ENCODE measurements at regions of chr16 and their contacts with region 1.

Region 1: GRCh38 chr16:10964039-10964890 is 19.9 kb downstream of the CLEC16A start:
- DNase-seq: peak; percentile 74
- H3K4me3 Mint-ChIP-seq: peak overlapping the region; percentile 68
- H3K27ac Mint-ChIP-seq: peak overlapping the region; percentile 97
- H3K4me1 Mint-ChIP-seq: peaks cover 75% of the 10 kb centered on the region
- H3K27me3 Mint-ChIP-seq: no peaks in the 10 kb centered on the region

Region 2: GRCh38 chr16:10594367-10594944 is 369.8 kb before region 1 on chr16:
- intact Hi-C with region 1: no loop called
- DNase-seq: no peak
- H3K4me3 Mint-ChIP-seq: no peak overlapping the region
- H3K27ac Mint-ChIP-seq: no peak overlapping the region
- H3K4me1 Mint-ChIP-seq: no peaks in the 10 kb centered on the region
- H3K27me3 Mint-ChIP-seq: peaks cover 2% of the 10 kb centered on the region

Region 3: DNA sequence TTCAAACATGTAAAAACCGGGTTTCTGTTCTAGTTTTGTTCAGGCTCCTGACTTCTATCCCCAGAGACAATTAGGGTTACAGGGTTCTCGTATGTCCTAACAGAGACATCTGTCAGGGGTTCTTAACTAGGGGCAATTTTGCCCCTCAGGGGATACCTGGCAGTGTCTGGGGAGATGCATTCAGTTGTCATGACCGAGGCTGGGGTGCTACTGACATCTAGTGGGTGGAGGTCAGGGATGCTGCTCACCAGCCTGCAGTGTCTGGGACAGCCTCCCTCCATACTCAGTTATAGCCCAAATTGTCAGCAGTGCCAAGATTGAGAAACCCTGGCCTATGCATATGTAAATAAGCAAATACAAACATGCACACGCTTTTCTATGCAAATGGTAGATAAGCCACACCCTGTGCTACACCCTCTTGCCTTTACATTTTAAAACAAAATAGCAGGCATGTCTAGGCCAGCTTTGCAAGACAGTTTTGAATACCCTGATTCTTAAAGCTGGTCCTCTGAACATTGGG is 17.5 kb after region 1 on chr16:
- intact Hi-C with region 1: no loop called
- DNase-seq: peak; percentile 34
- H3K4me3 Mint-ChIP-seq: no peak overlapping the region
- H3K27ac Mint-ChIP-seq: peak overlapping the region; percentile 40
- H3K4me1 Mint-ChIP-seq: peaks cover 73% of the 10 kb centered on the region
- H3K27me3 Mint-ChIP-seq: no peaks in the 10 kb centered on the region

Region 4: DNA sequence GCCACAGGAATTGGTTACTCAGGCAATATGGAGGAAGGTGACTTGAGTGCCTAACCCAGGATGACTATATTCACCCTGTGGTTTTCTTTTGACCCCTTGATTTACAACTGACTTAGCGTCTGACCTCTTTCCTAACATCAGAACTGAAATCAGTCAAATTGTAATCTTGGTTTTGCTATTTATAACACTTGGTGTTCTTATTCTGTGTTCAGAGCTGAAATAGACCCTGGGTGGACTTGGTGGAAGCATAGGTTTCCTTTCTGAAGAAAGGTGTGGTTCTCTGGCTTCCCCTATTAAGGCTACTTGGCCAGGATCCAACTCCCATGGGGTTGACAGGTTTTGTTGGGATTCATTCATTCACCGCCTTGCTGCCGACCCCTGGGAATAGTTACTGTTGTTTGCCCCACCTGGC is 60.9 kb after region 1 on chr16:
- intact Hi-C with region 1: loop called (anchors 1 kb)
- DNase-seq: no peak
- H3K4me3 Mint-ChIP-seq: no peak overlapping the region
- H3K27ac Mint-ChIP-seq: peak overlapping the region; percentile 82
- H3K4me1 Mint-ChIP-seq: peaks cover 31% of the 10 kb centered on the region
- H3K27me3 Mint-ChIP-seq: no peaks in the 10 kb centered on the region

Region 5: GRCh38 chr16:11036040-11036439 is 71.8 kb after region 1 on chr16:
- intact Hi-C with region 1: no loop called
- DNase-seq: no peak
- H3K4me3 Mint-ChIP-seq: no peak overlapping the region
- H3K27ac Mint-ChIP-seq: no peak overlapping the region
- H3K4me1 Mint-ChIP-seq: peaks cover 36% of the 10 kb centered on the region
- H3K27me3 Mint-ChIP-seq: no peaks in the 10 kb centered on the region

Region 6: GRCh38 chr16:11105038-11105903 is 141.0 kb after region 1 on chr16:
- intact Hi-C with region 1: loop called (anchors 1 kb)
- DNase-seq: peak; percentile 44
- H3K4me3 Mint-ChIP-seq: peak overlapping the region; percentile 65
- H3K27ac Mint-ChIP-seq: peak overlapping the region; percentile 88
- H3K4me1 Mint-ChIP-seq: peaks cover 75% of the 10 kb centered on the region
- H3K27me3 Mint-ChIP-seq: no peaks in the 10 kb centered on the region

Region 7: DNA sequence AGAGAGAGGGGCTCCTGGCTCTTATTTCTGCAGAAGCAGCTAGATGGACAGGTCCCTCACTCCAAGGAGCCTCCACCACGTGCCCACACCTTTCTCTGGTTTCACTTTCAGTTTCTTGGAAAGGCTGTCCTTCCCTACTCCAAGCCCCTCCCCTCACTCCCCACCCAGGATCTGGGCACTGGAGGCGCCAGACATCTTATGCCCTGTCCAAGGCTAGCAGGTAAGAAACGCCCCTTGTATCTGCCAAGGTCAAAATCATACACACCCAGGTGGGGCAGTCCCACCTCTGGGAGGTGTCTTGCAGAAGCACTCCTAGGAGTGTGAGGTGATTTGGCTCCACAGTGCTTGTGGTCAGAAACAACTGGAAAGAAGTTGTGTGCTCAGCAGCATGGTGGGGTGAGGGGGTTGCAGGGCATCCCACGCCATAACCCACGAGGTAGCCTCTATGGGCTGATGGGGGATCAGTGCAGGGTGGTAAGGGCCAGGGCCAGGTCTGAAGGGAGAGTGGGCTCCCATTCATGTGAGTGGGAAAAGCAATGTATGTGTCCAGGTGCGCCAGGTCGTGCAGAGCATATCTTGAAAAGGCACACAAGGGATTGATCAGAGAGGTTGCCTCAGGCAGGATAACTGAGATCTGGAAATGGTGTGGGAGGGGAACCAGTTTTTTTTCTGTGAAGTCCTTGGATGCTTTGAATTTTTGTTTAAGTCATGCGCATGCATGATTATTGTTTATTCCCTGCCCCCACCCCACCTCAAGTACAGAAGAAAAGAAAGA is 348.6 kb after region 1 on chr16:
- intact Hi-C with region 1: loop called (anchors 2 kb)
- DNase-seq: peak; percentile 38
- H3K4me3 Mint-ChIP-seq: peak overlapping the region; percentile 27
- H3K27ac Mint-ChIP-seq: peak overlapping the region; percentile 57
- H3K4me1 Mint-ChIP-seq: peaks cover 61% of the 10 kb centered on the region
- H3K27me3 Mint-ChIP-seq: peaks cover 3% of the 10 kb centered on the region

Region 8: GRCh38 chr16:11396241-11397048 is 432.2 kb after region 1 on chr16:
- intact Hi-C with region 1: loop called (anchors 2 kb)
- DNase-seq: peak; percentile 40
- H3K4me3 Mint-ChIP-seq: no peak overlapping the region
- H3K27ac Mint-ChIP-seq: no peak overlapping the region
- H3K4me1 Mint-ChIP-seq: no peaks in the 10 kb centered on the region
- H3K27me3 Mint-ChIP-seq: peaks cover 3% of the 10 kb centered on the region

Region 9: GRCh38 chr16:11586856-11587642 is 622.8 kb after region 1 on chr16 and contains the start of gene LITAF:
- intact Hi-C with region 1: loop called (anchors 1 kb)
- DNase-seq: peak; percentile 45
- H3K4me3 Mint-ChIP-seq: peak within 1 kb of the TSS; percentile 93
- H3K27ac Mint-ChIP-seq: peak within 1 kb of the TSS; percentile 92
- H3K4me1 Mint-ChIP-seq: peaks cover 38% of the 10 kb centered on the region
- H3K27me3 Mint-ChIP-seq: no peaks in the 10 kb centered on the region
- total RNA-seq, gene LITAF: 197 and 199 TPM in 2 replicates

Measured in activated T-helper 1 cell treated with anti-CD3 and anti-CD28 coated beads, Interleukin-12 subunit alpha, Interleukin-12 subunit beta, Interleukin-2, Interleukin-4 antibody, amounts not matched to agents 30 ng/mL and 10 ng/mL and 1 ng/mL, durations not matched to agents 14 hours and 24 hours and 36 hours (primary cell).